Ovary (tissue), 10 donors: ENCODE measurements at regions of chr17 and their contacts with region 1.

Region 1: GRCh38 chr17:58006924-58007780 is at the start of gene SRSF1:
- DNase-seq: peak; percentile 97 to 99 (median 98)
- H3K4me3 ChIP-seq: peak within 1 kb of the TSS; percentile 84
- H3K27ac ChIP-seq: peak within 1 kb of the TSS; percentile 91 to 96
- H3K4me1 ChIP-seq: peaks cover 5% of the 10 kb centered on the region
- H3K27me3 ChIP-seq: no peaks in the 10 kb centered on the region
- CTCF ChIP-seq: no peak
- EP300 ChIP-seq: peak; percentile 3
- POLR2A ChIP-seq: peak; percentile 98
- total RNA-seq, gene SRSF1: 89.8 to 184 (median 159) TPM

Region 2: GRCh38 chr17:57833179-57833939 is 173.8 kb before region 1 on chr17:
- intact Hi-C with region 1: no loop called
- DNase-seq: peak; percentile 64 to 76 (median 68)
- H3K4me3 ChIP-seq: peak overlapping the region; percentile 33
- H3K27ac ChIP-seq: peak overlapping the region in 1 of 2 donors; percentile 38
- H3K4me1 ChIP-seq: no peaks in the 10 kb centered on the region
- H3K27me3 ChIP-seq: no peaks in the 10 kb centered on the region
- CTCF ChIP-seq: peak; percentile 79 to 90 (median 83)
- EP300 ChIP-seq: no peak
- POLR2A ChIP-seq: no peak

Region 3: GRCh38 chr17:58082870-58083490 is 75.8 kb after region 1 on chr17 and contains the start of gene DYNLL2:
- intact Hi-C with region 1: loop called in 1 of 4 experiments (anchors 2 kb)
- DNase-seq: peak; percentile 91 to 94 (median 93)
- H3K4me3 ChIP-seq: peak within 1 kb of the TSS; percentile 99
- H3K27ac ChIP-seq: peak within 1 kb of the TSS; percentile 74 to 84
- H3K4me1 ChIP-seq: peaks cover 11% of the 10 kb centered on the region
- H3K27me3 ChIP-seq: no peaks in the 10 kb centered on the region
- CTCF ChIP-seq: no peak
- EP300 ChIP-seq: no peak
- POLR2A ChIP-seq: no peak
- total RNA-seq, gene DYNLL2: 11.0 to 42.5 (median 34.1) TPM